ENCODE measurements at regions of chr1 and their contacts with region 1.

Region 1: DNA sequence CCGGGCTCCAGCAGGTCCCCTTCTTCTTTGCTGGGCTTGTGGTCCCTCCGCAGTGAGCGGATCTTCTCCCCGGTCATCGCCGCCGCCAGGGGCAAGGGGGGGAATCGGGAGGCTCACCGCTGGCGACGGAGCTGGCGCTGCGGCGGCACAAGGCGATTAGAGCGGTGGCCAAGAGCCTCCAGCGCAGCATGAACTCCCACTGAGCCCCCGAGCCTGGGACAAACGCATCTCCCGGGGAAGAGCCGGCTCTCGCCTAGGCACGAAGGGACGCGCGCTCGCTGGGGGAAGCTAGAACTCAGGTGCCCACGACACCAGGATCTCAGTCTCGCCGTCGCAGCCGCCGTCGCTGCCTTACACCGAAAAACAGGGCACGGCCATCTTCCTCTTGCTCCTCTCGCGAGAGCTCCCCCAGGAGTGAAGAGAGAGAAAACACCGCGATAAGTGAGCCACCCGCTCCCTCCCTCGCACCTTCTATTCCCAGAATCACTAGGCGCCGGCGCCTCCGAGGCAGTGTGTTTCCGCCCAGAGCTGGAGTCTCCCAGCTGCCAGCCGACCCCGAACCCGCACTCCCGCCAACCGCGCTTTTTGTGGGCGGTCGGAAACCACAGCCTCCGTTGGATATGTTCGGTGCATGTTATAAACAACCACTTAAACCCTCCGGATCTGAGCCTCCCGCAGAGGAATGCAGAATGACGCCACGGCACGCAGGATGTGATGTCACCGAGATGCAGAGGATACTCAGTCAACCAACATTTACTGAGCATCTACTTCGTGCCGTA is at the start of gene ANKRD13C:
- DNase-seq: peak; percentile 95
- ATAC-seq: peak; percentile 96
- H3K4me3 Mint-ChIP-seq: peak within 1 kb of the TSS; percentile 91
- H3K27ac Mint-ChIP-seq: peak within 1 kb of the TSS; percentile 100
- H3K4me1 Mint-ChIP-seq: peaks cover 33% of the 10 kb centered on the region
- H3K27me3 Mint-ChIP-seq: no peaks in the 10 kb centered on the region
- total RNA-seq, gene ANKRD13C: 13.9 TPM

Region 2: GRCh38 chr1:70205434-70206118 is 148.9 kb before region 1 on chr1 and contains the start of gene LRRC40:
- CTCF ChIA-PET with region 1: no interaction called
- POLR2A ChIA-PET with region 1: no interaction called
- intact Hi-C with region 1: loop called (anchors 1 kb)
- DNase-seq: peak; percentile 97
- ATAC-seq: peak; percentile 89
- H3K4me3 Mint-ChIP-seq: peak within 1 kb of the TSS; percentile 99
- H3K27ac Mint-ChIP-seq: peak within 1 kb of the TSS; percentile 99
- H3K4me1 Mint-ChIP-seq: peaks cover 66% of the 10 kb centered on the region
- H3K27me3 Mint-ChIP-seq: no peaks in the 10 kb centered on the region
- total RNA-seq, gene LRRC40: 23.2 to 26.4 TPM

Region 3: GRCh38 chr1:70410604-70411359 is 56.3 kb after region 1 on chr1 and contains the start of gene CTH:
- CTCF ChIA-PET with region 1: interaction called, 16 read pairs
- POLR2A ChIA-PET with region 1: interaction called, 48 read pairs
- intact Hi-C with region 1: loop called (anchors 1 kb)
- DNase-seq: peak; percentile 96
- ATAC-seq: peak; percentile 95
- H3K4me3 Mint-ChIP-seq: peak within 1 kb of the TSS; percentile 90
- H3K27ac Mint-ChIP-seq: peak within 1 kb of the TSS; percentile 83
- H3K4me1 Mint-ChIP-seq: peaks cover 13% of the 10 kb centered on the region
- H3K27me3 Mint-ChIP-seq: no peaks in the 10 kb centered on the region
- total RNA-seq, gene CTH: 25.3 to 29.8 TPM

Region 4: DNA sequence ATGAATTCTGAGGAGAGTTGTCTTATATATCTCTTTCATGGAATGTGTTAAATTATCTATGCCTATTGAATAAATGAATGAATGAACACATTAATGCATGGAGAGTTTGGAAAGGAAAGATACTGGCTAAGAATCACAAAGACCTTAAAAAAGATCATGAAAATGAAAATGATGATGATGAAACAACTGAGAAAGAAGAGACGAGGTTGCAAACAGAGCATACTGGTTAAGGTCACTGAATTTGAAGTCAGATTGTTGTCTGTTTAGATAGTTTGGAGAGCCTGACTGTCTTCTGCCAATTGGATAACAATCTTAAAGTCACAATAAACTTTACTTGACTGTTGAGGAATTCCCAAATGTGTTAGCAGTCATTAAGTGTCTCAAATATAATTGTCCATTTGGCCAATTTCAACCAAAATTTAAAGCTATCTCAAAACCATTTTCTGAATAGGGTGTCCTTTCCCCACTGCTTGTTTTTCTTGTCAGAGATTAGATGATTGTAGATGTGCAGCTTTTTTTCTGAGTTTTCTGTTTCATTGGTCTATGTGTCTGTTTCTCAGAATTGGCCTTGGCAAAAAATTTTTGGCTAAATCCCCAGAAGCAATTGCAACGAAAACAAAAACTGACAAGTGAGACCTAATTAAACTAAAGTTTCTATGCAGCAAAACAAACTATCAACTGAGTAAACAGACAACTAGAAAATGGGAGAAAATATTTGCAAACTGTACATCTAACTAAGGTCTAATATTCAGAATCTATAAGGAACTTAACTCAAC is 560.9 kb after region 1 on chr1:
- CTCF ChIA-PET with region 1: no interaction called
- POLR2A ChIA-PET with region 1: no interaction called
- intact Hi-C with region 1: no loop called
- DNase-seq: no peak
- ATAC-seq: no peak
- H3K4me3 Mint-ChIP-seq: no peak overlapping the region
- H3K27ac Mint-ChIP-seq: no peak overlapping the region
- H3K4me1 Mint-ChIP-seq: no peaks in the 10 kb centered on the region
- H3K27me3 Mint-ChIP-seq: no peaks in the 10 kb centered on the region

Measured in activated CD4-positive, alpha-beta T cell treated with anti-CD3 and anti-CD28 coated beads for 36 hours (primary cell).